ENCODE measurements at regions of chr10 and their contacts with region 1.

Region 1: DNA sequence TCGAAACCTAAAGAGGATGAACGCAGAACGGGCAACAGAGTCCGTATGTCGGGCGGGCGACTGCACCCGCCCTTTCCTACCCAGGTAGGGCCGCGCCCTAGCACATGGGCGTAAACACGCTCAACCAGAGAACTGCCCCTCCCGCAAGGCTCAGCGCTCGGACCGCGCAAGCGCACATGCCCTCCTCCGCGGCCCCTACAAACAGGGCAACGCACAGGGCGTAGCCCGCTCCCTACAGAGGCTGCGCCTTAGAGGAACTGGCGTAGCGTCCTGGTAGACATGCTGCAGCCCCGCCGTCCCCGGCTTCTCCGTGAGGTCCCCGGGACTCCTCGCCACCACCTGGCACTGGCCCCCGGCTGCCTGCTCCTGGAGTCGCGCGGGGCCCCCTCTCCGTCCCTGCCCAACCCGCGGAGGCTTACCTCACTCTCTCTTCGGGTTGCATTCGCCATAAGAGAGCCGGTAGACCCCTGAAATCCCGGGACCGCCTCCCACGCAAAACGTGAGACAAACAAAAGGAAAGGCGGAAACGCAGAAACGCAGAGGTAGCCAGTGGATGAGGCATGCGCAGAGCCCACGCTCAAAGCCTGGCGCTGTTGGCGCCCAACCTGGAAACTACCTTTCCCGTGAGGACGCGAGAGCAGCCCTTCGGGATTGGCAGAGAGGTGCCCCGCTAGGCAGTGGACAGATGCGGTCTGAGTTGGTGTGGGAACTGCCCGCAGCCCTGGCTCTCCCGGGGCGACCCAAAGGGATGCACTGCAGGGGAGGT is at the start of gene ZNF33B:
- DNase-seq: peak; percentile 94
- H3K4me3 Mint-ChIP-seq: peak within 1 kb of the TSS; percentile 98
- H3K27ac Mint-ChIP-seq: peak within 1 kb of the TSS; percentile 98
- H3K4me1 Mint-ChIP-seq: peaks cover 21% of the 10 kb centered on the region
- H3K27me3 Mint-ChIP-seq: peaks cover 1% of the 10 kb centered on the region
- total RNA-seq, gene ZNF33B: 7.6 and 7.9 TPM in 2 replicates

Region 2: GRCh38 chr10:42552493-42553407 is 85.5 kb before region 1 on chr10:
- intact Hi-C with region 1: loop called (anchors 1 kb)
- DNase-seq: peak; percentile 94
- H3K4me3 Mint-ChIP-seq: peak overlapping the region; percentile 99
- H3K27ac Mint-ChIP-seq: peak overlapping the region; percentile 98
- H3K4me1 Mint-ChIP-seq: peaks cover 38% of the 10 kb centered on the region
- H3K27me3 Mint-ChIP-seq: no peaks in the 10 kb centered on the region

Region 3: DNA sequence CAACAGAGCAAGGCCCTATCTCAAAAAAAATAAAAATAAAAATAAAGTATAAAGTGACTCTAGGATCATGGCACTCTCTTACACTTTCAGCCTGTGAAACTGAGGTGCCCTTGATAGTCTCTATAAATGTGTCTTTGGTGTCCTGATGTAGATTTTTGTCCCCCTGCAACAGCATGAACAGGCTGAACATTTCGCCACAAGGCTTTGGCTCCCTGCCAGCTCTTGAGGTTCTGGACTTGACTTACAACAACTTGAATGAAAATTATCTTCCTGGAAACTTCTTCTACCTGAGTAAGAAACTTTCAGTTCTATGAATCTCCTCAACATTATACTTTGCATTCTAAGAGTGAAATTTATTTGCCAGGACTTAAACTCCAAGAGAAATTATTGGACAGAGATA is 96.3 kb after region 1 on chr10:
- intact Hi-C with region 1: no loop called
- DNase-seq: no peak
- H3K4me3 Mint-ChIP-seq: no peak overlapping the region
- H3K27ac Mint-ChIP-seq: no peak overlapping the region
- H3K4me1 Mint-ChIP-seq: no peaks in the 10 kb centered on the region
- H3K27me3 Mint-ChIP-seq: peaks cover 1% of the 10 kb centered on the region

Region 4: GRCh38 chr10:42801135-42801534 is 162.9 kb after region 1 on chr10:
- intact Hi-C with region 1: loop called (anchors 5 kb)
- DNase-seq: no peak
- H3K4me3 Mint-ChIP-seq: no peak overlapping the region
- H3K27ac Mint-ChIP-seq: peak overlapping the region; percentile 58
- H3K4me1 Mint-ChIP-seq: peaks cover 12% of the 10 kb centered on the region
- H3K27me3 Mint-ChIP-seq: no peaks in the 10 kb centered on the region

Region 5: DNA sequence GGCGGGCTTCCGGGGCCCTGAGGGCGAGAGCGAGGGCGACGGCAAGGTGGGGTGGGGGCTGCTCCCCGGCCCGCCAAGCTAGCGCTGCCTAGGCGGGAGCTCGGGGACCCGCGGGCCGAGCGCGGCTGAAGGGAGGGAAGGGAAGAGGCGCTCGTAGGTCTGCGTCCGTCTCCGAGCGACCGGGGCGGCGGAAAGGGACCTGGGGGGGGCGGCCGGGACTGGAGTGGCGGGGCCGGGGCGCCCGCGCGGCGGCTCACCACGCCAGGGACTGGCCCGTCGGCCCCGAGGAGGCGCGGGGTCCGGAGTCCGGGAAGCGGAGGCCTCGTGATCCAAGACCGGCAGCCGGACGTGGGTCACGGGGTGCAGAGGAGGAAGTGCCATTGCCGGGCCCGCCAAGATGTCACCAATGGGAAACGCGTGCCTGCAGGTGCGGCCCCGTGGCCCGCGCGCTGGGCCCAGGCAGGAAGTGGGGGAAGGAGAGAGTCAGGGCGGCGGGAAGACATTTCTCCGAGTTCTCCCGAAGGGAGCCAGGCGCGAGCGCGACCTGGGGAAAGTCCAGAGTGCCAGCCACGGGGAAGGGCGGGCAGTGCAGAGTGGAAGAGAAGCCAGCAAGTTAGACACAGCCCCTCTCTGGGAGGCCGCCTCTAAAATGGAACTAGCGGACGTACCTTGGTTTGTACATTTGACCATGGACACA is 758.8 kb after region 1 on chr10:
- intact Hi-C with region 1: loop called (anchors 2 kb)
- DNase-seq: peak; percentile 81
- H3K4me3 Mint-ChIP-seq: peak overlapping the region; percentile 90
- H3K27ac Mint-ChIP-seq: peak overlapping the region; percentile 94
- H3K4me1 Mint-ChIP-seq: peaks cover 83% of the 10 kb centered on the region
- H3K27me3 Mint-ChIP-seq: no peaks in the 10 kb centered on the region

Region 6: DNA sequence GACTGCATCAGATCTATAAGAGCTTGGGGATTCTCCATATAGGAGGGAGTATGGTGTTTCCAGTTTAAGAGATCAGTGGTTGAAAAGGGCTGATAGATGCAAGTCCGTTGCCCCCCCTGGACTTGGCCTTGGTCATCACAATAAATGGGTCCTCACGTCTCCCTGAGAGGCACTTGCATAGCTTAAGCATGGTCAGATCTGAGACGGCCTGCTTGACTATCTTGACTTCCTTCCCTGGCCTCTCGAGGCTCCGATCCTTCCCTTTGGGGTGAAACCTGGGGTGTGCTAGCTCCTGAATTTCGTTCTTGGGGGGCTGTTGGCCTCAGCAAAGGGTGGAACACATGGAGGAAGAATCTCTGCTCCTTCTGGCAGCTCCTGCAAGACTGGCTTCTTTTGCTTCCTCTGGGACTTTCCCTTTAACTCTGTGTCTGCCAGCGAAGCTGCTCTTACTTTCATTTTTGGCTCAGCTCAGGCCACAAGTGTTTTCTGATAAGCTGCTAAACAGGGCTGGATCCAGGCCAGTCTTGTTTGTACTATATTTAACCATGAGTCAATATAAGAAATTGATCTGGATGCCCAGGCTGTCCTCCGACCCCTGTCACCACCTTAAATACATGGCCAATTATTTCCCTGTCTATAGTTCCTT is 956.8 kb after region 1 on chr10:
- intact Hi-C with region 1: loop called (anchors 10 kb)
- DNase-seq: peak; percentile 29
- H3K4me3 Mint-ChIP-seq: peak overlapping the region; percentile 51
- H3K27ac Mint-ChIP-seq: no peak overlapping the region
- H3K4me1 Mint-ChIP-seq: peaks cover 22% of the 10 kb centered on the region
- H3K27me3 Mint-ChIP-seq: peaks cover 16% of the 10 kb centered on the region

Region 7: GRCh38 chr10:43648398-43649184 is 1010.4 kb after region 1 on chr10 and contains the start of gene ZNF32:
- intact Hi-C with region 1: loop called (anchors 1 kb)
- DNase-seq: peak; percentile 78
- H3K4me3 Mint-ChIP-seq: peak within 1 kb of the TSS; percentile 89
- H3K27ac Mint-ChIP-seq: peak within 1 kb of the TSS; percentile 90
- H3K4me1 Mint-ChIP-seq: peaks cover 11% of the 10 kb centered on the region
- H3K27me3 Mint-ChIP-seq: peaks cover 11% of the 10 kb centered on the region
- total RNA-seq, gene ZNF32: 13.2 and 13.7 TPM in 2 replicates

Region 8: DNA sequence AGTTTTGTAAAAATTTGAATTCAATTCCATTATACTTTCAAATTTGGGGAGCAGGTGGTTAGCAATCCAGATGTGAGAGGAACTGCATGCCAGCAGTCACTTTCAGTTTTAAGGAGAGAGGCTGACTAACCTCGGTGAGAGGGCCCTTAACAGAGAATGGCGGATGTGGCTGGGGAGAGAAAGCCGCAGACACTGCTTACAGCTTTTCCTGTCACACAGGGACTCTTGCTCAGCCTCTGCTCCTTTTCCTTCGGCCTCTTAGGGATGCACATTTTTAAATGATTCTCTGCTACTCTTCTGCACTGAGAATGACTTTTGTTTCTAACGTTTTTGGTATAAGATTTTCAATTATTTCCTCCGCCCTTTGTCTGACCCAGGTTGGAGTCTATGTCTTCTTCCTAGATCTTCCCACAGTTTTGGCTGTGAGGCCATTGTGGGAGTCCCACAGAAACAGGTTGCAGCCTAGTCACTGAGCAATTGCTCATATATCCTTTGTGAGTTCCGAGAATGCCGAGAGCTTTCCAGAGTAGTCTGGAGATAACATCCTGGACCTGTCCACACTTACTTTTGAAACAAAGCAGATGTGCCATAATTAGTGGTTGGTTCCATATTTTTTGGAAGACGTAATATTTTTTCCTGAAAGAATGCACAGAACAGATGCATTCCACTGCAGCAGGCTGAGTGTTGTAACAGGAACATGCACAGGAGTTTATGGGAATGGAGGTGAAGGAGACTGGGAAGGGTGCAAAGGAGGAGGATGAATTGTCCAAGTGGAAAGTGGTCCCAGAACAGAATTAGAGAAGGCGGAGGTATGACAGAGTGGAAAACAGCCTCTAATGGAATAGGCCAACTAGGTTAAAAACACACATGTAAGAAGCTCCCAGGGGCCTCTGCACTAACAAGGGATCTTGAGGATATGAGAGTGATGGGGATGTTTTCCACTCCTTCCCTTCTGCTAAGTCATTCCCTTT is 1178.4 kb after region 1 on chr10:
- intact Hi-C with region 1: loop called (anchors 5 kb)
- DNase-seq: peak; percentile 74
- H3K4me3 Mint-ChIP-seq: peak overlapping the region; percentile 70
- H3K27ac Mint-ChIP-seq: peak overlapping the region; percentile 69
- H3K4me1 Mint-ChIP-seq: peaks cover 30% of the 10 kb centered on the region
- H3K27me3 Mint-ChIP-seq: peaks cover 32% of the 10 kb centered on the region